ENCODE measurements at regions of chr2 and their contacts with region 1.

Region 1: DNA sequence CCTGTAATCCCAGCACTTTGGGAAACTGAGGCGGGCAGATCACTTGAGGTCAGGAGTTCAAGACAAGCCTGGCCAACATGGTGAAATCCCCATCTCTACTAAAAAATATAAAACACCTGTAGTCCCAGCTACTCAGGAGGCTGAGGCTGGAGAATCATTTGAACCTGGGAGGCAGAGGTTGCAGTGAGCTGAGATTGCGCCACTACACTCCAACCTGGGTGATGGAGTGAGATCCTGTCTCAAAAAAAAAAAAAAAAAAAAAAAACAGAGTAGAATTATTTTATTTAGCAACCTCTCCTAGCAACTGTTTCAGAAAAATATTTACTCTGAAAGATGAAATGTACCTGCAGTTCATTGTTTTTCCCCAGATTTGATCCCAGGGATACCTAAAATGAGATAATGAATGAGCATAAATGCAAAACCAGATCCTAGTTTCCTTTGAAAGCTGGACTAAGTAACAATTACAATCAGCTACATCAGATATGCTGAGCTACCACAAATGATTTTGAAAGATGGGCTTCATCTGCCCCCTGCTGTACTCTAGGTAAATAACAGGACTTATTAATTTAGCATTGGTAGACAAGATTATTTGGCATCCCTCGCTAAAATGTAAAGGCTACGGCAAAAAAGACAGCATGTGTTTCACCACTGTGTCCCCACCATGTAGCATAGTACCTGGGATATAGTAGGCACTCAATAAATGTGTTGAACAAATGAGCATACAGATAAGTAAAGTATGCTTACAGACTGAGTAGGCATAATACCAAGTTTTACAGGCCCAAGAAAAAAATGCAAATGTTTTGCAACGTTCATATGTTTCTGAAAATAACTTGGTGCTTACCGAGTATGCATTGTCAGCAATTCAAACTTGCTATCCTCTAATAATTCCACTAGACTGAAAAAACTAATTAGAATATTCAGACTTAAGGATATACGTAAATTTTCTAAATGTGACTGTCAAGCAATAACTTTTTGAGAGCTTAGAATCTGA is 102.5 kb downstream of the ATL2 start:
- DNase-seq: peak in 19 of 42 donors; percentile 12 to 72 (median 37)

Region 2: GRCh38 chr2:37982147-37982582 is 292.4 kb before region 1 on chr2:
- intact Hi-C with region 1: loop called (anchors 2 kb)
- DNase-seq: peak; percentile 25 to 89 (median 73)